AG04449 (cell line): ENCODE measurements at regions of chr2 and their contacts with region 1.

Region 1: DNA sequence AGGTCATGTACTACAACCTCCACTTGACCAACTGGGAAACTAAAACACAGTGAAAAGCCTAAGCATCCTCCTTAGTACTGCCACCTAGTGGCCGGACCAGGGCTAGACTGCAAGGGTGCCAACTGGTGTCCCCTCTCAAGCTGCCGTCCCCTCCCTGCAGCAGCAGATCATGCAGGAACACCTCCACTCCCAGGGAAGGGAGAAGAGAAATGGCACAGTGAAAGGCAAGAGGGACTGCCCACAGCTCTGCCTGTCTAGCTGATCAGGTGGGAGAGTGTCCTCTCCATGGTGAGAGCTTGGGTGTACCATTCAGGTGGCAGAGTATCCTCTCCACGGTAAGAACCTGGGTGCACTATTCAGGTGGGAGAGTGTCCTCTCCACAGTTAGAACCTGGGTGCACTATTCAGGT is 78.1 kb downstream of the AAK1 start:
- DNase-seq: no peak
- H3K4me3 ChIP-seq: no peak overlapping the region
- CTCF ChIP-seq: peak; percentile 59

Region 2: GRCh38 chr2:69436938-69437750 is 128.3 kb before region 1 on chr2 and contains the start of gene NFU1:
- CTCF ChIA-PET with region 1: interaction called, 12 read pairs
- POLR2A ChIA-PET with region 1: no interaction called
- DNase-seq: peak; percentile 79
- H3K4me3 ChIP-seq: peak within 1 kb of the TSS; percentile 95
- CTCF ChIP-seq: peak; percentile 91

Region 3: DNA sequence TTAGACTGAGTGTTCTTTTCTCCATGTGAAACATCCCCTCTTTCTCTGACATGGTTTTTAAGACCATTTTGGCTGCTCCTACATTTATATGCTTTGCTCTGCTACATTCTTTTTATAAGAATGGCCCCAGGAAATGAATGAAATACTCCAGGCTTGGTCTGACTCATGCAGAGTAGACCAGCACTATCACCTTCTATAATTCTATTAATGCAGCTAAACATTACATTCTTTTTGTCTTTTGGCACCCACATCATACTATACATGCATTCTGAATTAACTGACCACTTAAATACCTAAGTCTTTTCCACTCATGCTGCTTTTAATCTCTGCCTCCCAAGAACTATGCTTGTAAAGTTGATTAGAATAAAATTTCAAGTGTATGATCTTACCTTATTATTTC is 16.0 kb before region 1 on chr2:
- CTCF ChIA-PET with region 1: interaction called, 27 read pairs
- POLR2A ChIA-PET with region 1: no interaction called
- DNase-seq: no peak
- H3K4me3 ChIP-seq: no peak overlapping the region
- CTCF ChIP-seq: no peak

Region 4: DNA sequence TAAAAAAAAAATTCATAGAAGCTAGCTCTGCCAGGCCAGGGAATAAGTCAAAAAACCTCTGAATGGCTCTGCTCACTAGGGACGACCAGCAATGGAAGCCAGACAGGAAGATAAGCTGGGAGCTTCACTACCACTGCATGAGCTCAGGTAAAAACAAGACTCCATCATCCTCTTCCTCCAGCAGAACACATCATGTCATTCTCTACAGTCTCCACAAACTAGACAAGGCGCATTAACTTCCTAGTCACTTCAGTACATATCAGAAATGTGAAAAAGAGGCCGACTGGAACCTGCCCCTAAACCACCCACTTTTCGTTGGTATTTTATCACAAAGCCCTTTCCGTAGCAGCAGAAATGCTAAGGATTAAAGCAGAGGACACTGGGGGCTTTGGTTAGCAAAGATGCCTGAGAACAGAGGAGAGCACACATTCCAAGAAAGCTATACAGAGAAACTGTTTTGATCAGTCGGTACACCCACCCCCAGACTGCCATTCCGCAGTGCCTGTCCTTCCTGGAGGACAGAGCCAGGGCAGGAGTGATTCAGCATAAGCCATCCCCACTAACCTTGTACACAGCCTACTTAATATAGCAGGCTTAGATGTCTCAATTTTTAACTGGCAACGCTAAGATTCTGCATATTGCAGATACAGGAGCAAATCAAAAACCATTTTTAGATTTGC is 24.7 kb after region 1 on chr2:
- CTCF ChIA-PET with region 1: interaction called, 16 read pairs
- POLR2A ChIA-PET with region 1: no interaction called
- DNase-seq: no peak
- H3K4me3 ChIP-seq: no peak overlapping the region
- CTCF ChIP-seq: no peak

Region 5: GRCh38 chr2:69717861-69718273 is 152.4 kb after region 1 on chr2:
- CTCF ChIA-PET with region 1: interaction called, 123 read pairs
- POLR2A ChIA-PET with region 1: no interaction called
- DNase-seq: no peak
- H3K4me3 ChIP-seq: no peak overlapping the region
- CTCF ChIP-seq: no peak